ENCODE measurements at regions of chr1 and their contacts with region 1.

Region 1: DNA sequence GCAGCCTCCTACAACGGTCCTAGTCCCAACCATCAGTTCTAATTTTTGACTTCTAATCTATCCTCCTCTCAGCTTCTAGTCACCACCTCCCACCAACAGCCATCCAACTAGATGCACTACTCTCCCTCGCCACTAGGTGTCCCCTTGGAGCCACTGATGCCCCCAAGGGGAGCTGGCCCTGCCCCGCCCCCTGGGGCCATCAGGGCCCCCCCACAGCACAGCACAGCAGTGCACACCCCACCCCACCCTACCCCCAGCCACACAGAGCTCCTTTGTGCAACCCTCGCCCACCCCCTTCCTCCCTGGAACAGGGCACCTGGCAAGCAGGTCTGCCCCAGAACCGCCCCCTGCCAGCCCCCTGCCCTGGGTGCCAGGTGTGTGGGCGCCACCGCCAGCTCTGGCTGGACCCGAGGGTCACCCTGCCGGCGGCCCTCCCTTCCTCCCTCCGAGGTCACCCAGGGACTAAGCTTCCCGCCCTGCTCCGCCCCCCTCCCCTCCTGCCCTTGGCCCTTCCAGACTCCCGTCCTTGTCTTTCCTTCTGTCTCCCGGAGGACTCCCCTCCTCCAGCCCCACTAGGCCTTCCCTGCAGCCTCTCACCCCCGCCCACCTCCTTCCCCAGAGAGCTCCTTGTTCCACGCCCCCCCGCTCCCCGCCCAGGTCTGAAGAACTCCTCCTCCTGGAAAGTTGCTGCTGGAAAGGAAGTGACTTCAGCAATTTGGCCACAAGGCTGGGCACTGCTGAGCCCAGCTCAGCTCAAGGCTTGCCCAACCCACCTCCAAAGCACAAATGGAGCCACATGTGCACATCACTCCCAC is 47.0 kb downstream of the AHDC1 start:
- DNase-seq: peak; percentile 91 to 95
- ATAC-seq: peak; percentile 85 to 92
- H3K4me3 ChIP-seq: peak overlapping the region; percentile 34
- H3K27ac ChIP-seq: peak overlapping the region; percentile 89 to 94
- H3K4me1 ChIP-seq: peaks cover 56% of the 10 kb centered on the region
- CTCF ChIP-seq: peak; percentile 68
- EP300 ChIP-seq: no peak
- POLR2A ChIP-seq: peak; percentile 54
- RAD21 ChIP-seq: peak; percentile 77 to 88

Region 2: GRCh38 chr1:27522432-27523351 is 34.3 kb before region 1 on chr1:
- CTCF ChIA-PET with region 1: interaction called, 13 read pairs
- POLR2A ChIA-PET with region 1: no interaction called
- DNase-seq: peak in 1 of 2 experiments; percentile 32
- ATAC-seq: peak in 1 of 2 experiments; percentile 59; a peak in 3 of 6 replicates
- H3K4me3 ChIP-seq: no peak overlapping the region
- H3K27ac ChIP-seq: peak overlapping the region in 1 of 2 experiments; percentile 62; a peak in 4 of 6 replicates
- H3K4me1 ChIP-seq: peaks cover 17% of the 10 kb centered on the region
- CTCF ChIP-seq: peak; percentile 26; the same call in 2 of the 3 replicates
- EP300 ChIP-seq: no peak
- POLR2A ChIP-seq: no peak
- RAD21 ChIP-seq: peak; percentile 42 to 52; a peak in 4 of 5 replicates

Region 3: DNA sequence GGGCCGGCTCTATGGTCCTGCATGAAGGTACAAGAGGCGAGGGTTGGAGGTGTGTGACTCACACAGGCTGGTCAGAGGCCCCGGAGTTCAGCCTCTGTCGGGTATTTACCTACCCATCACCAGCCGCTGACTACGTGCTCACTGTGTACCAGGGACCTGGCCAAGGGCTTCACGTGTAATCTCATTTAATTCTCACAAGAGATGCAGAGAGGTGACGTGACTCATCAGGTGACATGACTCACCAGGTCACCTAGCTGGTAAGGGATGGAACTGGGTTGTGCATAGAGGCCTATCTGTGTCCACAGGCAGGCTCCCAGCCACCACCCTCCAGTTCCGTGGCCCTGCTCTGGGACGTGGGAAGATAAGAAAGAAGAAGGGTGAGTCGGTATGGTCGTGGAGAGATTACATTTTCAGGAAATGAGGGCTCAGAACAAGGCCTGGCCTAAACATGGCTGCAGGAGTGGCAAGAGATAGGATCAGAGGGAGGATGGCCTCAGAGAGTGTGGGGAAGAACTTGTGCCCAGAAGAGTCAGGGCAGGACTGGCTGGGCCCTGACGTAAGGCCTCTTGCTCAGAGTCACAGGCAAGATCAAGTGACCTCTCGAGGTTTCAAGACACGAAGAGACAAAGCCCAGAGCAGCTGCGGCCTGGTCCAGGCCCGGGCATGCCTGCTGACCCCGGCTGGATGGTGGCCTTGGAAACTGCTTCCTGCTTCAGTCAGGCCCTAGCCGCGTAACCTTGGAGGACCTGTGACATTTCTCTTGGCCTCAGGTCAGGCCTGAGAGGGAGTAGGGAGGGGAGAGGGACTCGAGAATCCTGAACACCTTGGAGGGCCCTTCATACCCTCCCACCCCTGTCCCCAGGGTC is 14.3 kb before region 1 on chr1:
- CTCF ChIA-PET with region 1: interaction called, 86 read pairs
- POLR2A ChIA-PET with region 1: interaction called, 4 read pairs
- DNase-seq: peak; percentile 88 to 94
- ATAC-seq: peak; percentile 86 to 87
- H3K4me3 ChIP-seq: no peak overlapping the region; the same call in 2 of the 3 replicates
- H3K27ac ChIP-seq: peak overlapping the region; percentile 96 to 99
- H3K4me1 ChIP-seq: peaks cover 85% of the 10 kb centered on the region
- CTCF ChIP-seq: no peak
- EP300 ChIP-seq: no peak; a peak in 1 of 5 replicates
- POLR2A ChIP-seq: no peak
- RAD21 ChIP-seq: no peak; a peak in 2 of 5 replicates

Region 4: DNA sequence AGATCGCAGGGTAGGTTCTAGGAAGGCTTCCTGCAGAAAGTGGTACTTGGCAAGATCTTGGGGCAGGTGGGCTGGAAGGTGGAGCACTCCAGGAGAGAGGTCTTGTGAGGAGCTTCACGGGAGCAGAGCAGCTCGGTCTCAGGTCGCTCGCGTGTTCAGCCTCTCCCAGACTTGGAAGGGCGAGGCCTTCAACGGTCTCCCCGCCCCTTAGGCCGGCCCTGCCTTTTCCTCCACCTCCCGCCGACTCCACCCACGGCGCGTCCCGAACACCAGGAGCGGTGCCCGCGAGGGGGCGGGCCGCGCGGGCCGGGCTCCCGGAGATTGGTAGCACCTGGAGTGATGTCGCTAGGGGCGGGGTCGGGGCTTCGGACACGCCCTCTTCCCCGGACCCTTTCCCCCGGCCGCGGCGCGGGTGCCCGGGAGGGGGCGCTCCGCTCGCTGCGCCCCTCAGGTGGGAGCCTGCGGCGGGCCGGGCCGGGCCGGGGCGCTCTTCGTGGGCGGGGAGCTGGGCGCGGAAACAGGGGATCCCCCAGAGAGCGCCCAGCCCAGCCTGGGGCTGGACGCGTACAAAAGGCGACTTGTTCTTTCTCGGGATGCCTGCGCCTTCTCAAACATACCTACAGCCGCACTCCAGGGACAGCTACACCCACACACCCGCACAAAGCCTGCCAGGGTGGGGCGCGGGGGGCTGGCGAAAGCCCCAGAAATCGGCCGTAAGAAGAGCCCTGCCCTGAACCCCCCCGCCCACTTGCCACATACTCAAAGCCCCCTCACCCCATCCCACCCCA is 11.5 kb after region 1 on chr1:
- CTCF ChIA-PET with region 1: interaction called, 125 read pairs
- POLR2A ChIA-PET with region 1: interaction called, 7 read pairs
- DNase-seq: peak; percentile 86 to 93
- ATAC-seq: peak; percentile 76 to 88
- H3K4me3 ChIP-seq: peak overlapping the region; percentile 44
- H3K27ac ChIP-seq: peak overlapping the region; percentile 85
- H3K4me1 ChIP-seq: peaks cover 94% of the 10 kb centered on the region
- CTCF ChIP-seq: peak; percentile 80
- EP300 ChIP-seq: no peak
- POLR2A ChIP-seq: peak; percentile 59
- RAD21 ChIP-seq: peak in 1 of 2 experiments; percentile 43; a peak in 1 of 5 replicates

Region 5: GRCh38 chr1:27574871-27575831 is 18.2 kb after region 1 on chr1:
- CTCF ChIA-PET with region 1: interaction called, 125 read pairs
- POLR2A ChIA-PET with region 1: interaction called, 13 read pairs
- DNase-seq: peak; percentile 46 to 65
- ATAC-seq: peak; percentile 79 to 80
- H3K4me3 ChIP-seq: peak overlapping the region; percentile 75
- H3K27ac ChIP-seq: peak overlapping the region; percentile 98 to 99
- H3K4me1 ChIP-seq: peaks cover 55% of the 10 kb centered on the region
- CTCF ChIP-seq: peak; percentile 57
- EP300 ChIP-seq: no peak
- POLR2A ChIP-seq: no peak
- RAD21 ChIP-seq: 0 out of 5 replicates have a peak, but pooled peaks of 1 of the 2 experiments have one; percentile 19

Region 6: GRCh38 chr1:27581823-27582243 is 24.8 kb after region 1 on chr1:
- CTCF ChIA-PET with region 1: interaction called, 38 read pairs
- POLR2A ChIA-PET with region 1: interaction called, 13 read pairs
- DNase-seq: no peak
- ATAC-seq: no peak
- H3K4me3 ChIP-seq: no peak overlapping the region
- H3K27ac ChIP-seq: no peak overlapping the region
- H3K4me1 ChIP-seq: peaks cover under 1% of the 10 kb centered on the region; the same call in 1 of the 3 replicates
- CTCF ChIP-seq: no peak
- EP300 ChIP-seq: no peak
- POLR2A ChIP-seq: no peak
- RAD21 ChIP-seq: no peak

Region 7: GRCh38 chr1:27589841-27590426 is 32.9 kb after region 1 on chr1:
- CTCF ChIA-PET with region 1: interaction called, 314 read pairs
- POLR2A ChIA-PET with region 1: no interaction called
- DNase-seq: peak in 1 of 2 experiments; percentile 49
- ATAC-seq: peak; percentile 45 to 66; a peak in 4 of 6 replicates
- H3K4me3 ChIP-seq: no peak overlapping the region
- H3K27ac ChIP-seq: peak overlapping the region; percentile 59 to 84; a peak in 5 of 6 replicates
- H3K4me1 ChIP-seq: peaks cover 38% of the 10 kb centered on the region
- CTCF ChIP-seq: no peak
- EP300 ChIP-seq: no peak
- POLR2A ChIP-seq: no peak
- RAD21 ChIP-seq: no peak

Measured in A549 (cell line).